AG04450 (cell line): ENCODE measurements at regions of chr1 and their contacts with region 1.

Region 1: GRCh38 chr1:29181413-29182225 is at the start of gene SRSF4:
- DNase-seq: peak; percentile 97
- H3K4me3 ChIP-seq: peak within 1 kb of the TSS; percentile 89
- H3K27ac ChIP-seq: peak within 1 kb of the TSS; percentile 98
- H3K27me3 ChIP-seq: no peaks in the 10 kb centered on the region
- CTCF ChIP-seq: peak; percentile 57
- polyA plus RNA-seq, gene SRSF4: 39.7 and 45.6 TPM in 2 replicates

Region 2: GRCh38 chr1:28682840-28683239 is 498.8 kb before region 1 on chr1:
- CTCF ChIA-PET with region 1: interaction called, 10 read pairs
- POLR2A ChIA-PET with region 1: no interaction called
- DNase-seq: no peak
- H3K4me3 ChIP-seq: no peak overlapping the region
- H3K27ac ChIP-seq: no peak overlapping the region
- H3K27me3 ChIP-seq: no peaks in the 10 kb centered on the region
- CTCF ChIP-seq: no peak

Region 3: GRCh38 chr1:29062157-29062942 is 119.3 kb before region 1 on chr1:
- CTCF ChIA-PET with region 1: no interaction called
- POLR2A ChIA-PET with region 1: no interaction called
- DNase-seq: no peak
- H3K4me3 ChIP-seq: no peak overlapping the region
- H3K27ac ChIP-seq: no peak overlapping the region
- H3K27me3 ChIP-seq: peaks cover 2% of the 10 kb centered on the region
- CTCF ChIP-seq: no peak

Region 4: GRCh38 chr1:29124366-29125236 is 57.0 kb before region 1 on chr1:
- CTCF ChIA-PET with region 1: interaction called, 10 read pairs
- POLR2A ChIA-PET with region 1: interaction called, 23 read pairs
- DNase-seq: peak; percentile 37
- H3K4me3 ChIP-seq: peak overlapping the region; percentile 68
- H3K27ac ChIP-seq: peak overlapping the region; percentile 93
- H3K27me3 ChIP-seq: no peaks in the 10 kb centered on the region
- CTCF ChIP-seq: peak; percentile 71

Region 5: DNA sequence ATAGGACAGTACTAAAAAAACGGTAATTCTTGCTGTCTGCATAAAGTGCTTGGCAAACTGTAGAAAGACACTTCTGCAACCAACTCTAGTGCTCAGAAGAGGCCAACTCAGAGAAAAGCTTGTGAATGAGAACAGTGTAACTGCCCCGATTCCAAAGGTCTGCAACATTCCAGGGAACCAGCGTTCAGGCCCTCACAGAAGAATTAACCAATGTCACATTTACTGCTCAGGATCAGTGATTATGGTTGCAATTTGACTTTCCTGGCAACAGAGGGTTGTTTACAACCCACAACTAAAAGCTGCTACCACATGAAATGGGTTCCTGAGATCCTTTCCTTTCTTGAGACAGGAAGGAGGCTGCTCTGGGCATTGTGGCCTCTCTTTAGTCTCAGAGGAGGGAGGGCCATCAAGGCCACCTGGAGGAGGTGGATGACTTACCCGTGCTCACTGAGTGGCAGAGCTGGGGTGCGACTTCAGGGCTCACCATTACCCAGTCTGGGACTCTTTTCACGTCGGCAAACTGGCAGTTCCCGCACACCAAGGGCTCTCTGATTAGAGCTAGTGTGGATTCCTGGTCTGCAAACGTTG is 15.2 kb before region 1 on chr1:
- CTCF ChIA-PET with region 1: interaction called, 13 read pairs
- POLR2A ChIA-PET with region 1: interaction called, 4 read pairs
- DNase-seq: no peak
- H3K4me3 ChIP-seq: no peak overlapping the region
- H3K27ac ChIP-seq: no peak overlapping the region
- H3K27me3 ChIP-seq: no peaks in the 10 kb centered on the region
- CTCF ChIP-seq: no peak

Region 6: GRCh38 chr1:29202584-29203340 is 21.1 kb after region 1 on chr1:
- CTCF ChIA-PET with region 1: interaction called, 79 read pairs
- POLR2A ChIA-PET with region 1: interaction called, 37 read pairs
- DNase-seq: peak; percentile 98
- H3K4me3 ChIP-seq: no peak overlapping the region
- H3K27ac ChIP-seq: peak overlapping the region; percentile 92
- H3K27me3 ChIP-seq: no peaks in the 10 kb centered on the region
- CTCF ChIP-seq: peak; percentile 95

Region 7: GRCh38 chr1:29332204-29332603 is 150.6 kb after region 1 on chr1:
- CTCF ChIA-PET with region 1: no interaction called
- POLR2A ChIA-PET with region 1: no interaction called
- DNase-seq: no peak
- H3K4me3 ChIP-seq: no peak overlapping the region
- H3K27ac ChIP-seq: no peak overlapping the region
- H3K27me3 ChIP-seq: peaks cover 8% of the 10 kb centered on the region
- CTCF ChIP-seq: peak; percentile 45; the same call in 1 of the 2 replicates

Region 8: GRCh38 chr1:30120245-30121000 is 938.8 kb after region 1 on chr1:
- CTCF ChIA-PET with region 1: no interaction called
- POLR2A ChIA-PET with region 1: no interaction called
- DNase-seq: no peak
- H3K4me3 ChIP-seq: no peak overlapping the region
- H3K27ac ChIP-seq: no peak overlapping the region
- H3K27me3 ChIP-seq: peaks cover 3% of the 10 kb centered on the region
- CTCF ChIP-seq: no peak